GM12878 (cell line): ENCODE measurements at regions of chr6 and their contacts with region 1.

Region 1: GRCh38 chr6:52352239-52353008 is 9.5 kb upstream of the PAQR8 start:
- DNase-seq: peak; percentile 79
- ATAC-seq: peak; percentile 93
- H3K4me3 ChIP-seq: no peak overlapping the region
- H3K27ac ChIP-seq: peak overlapping the region; percentile 6; the same call in 1 of the 2 replicates
- H3K4me1 ChIP-seq: peaks cover 32% of the 10 kb centered on the region
- H3K27me3 ChIP-seq: no peaks in the 10 kb centered on the region
- CTCF ChIP-seq: no peak
- EP300 ChIP-seq: peak; percentile 22 to 66; a peak in 1 of 4 replicates
- POLR2A ChIP-seq: no peak
- RAD21 ChIP-seq: no peak

Region 2: DNA sequence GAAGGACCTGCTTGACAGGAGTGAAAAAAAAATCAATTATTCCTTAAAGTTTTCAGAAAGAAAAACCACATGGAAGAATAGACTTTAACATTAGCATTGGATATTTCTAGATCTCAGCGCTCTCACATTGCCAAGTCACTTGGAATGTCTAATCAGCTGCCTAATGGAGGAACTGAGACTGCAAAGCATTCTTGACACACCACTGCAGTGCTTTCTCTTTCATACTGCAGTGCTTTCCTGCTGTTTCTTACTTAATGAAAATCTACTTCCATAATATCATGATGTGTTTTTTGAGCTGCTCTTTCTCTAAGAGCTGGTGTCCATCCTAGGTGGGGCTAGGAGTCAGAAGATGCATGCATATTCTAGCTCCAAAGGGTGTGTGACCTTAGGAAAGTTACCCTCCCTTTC is 47.4 kb before region 1 on chr6:
- CTCF ChIA-PET with region 1: interaction called, 3 read pairs
- POLR2A ChIA-PET with region 1: interaction called, 9 read pairs
- RAD21 ChIA-PET with region 1: interaction called, 7 read pairs
- SMC1A ChIA-PET with region 1: interaction called, 34 read pairs
- in situ Hi-C with region 1: loop called (anchors 5 kb)
- intact Hi-C with region 1: loop called (anchors 2 kb)
- DNase-seq: no peak
- ATAC-seq: peak; percentile 74
- H3K4me3 ChIP-seq: peak overlapping the region; percentile 25; the same call in 1 of the 2 replicates
- H3K27ac ChIP-seq: peak overlapping the region; percentile 89
- H3K4me1 ChIP-seq: peaks cover 49% of the 10 kb centered on the region
- H3K27me3 ChIP-seq: no peaks in the 10 kb centered on the region
- CTCF ChIP-seq: no peak
- EP300 ChIP-seq: peak in 1 of 2 experiments; percentile 46; a peak in 2 of 4 replicates
- POLR2A ChIP-seq: no peak
- RAD21 ChIP-seq: 0 out of 2 replicates have a peak, but pooled peaks have one; percentile 1

Region 3: GRCh38 chr6:52317841-52318581 is 34.4 kb before region 1 on chr6:
- CTCF ChIA-PET with region 1: interaction called, 9 read pairs
- POLR2A ChIA-PET with region 1: interaction called, 6 read pairs
- RAD21 ChIA-PET with region 1: interaction called, 4 read pairs
- SMC1A ChIA-PET with region 1: interaction called, 6 read pairs
- in situ Hi-C with region 1: no loop called
- intact Hi-C with region 1: loop called (anchors 2 kb)
- DNase-seq: peak; percentile 62
- ATAC-seq: peak; percentile 99
- H3K4me3 ChIP-seq: no peak overlapping the region
- H3K27ac ChIP-seq: no peak overlapping the region
- H3K4me1 ChIP-seq: peaks cover 15% of the 10 kb centered on the region
- H3K27me3 ChIP-seq: no peaks in the 10 kb centered on the region
- CTCF ChIP-seq: no peak
- EP300 ChIP-seq: no peak; a peak in 1 of 4 replicates
- POLR2A ChIP-seq: no peak
- RAD21 ChIP-seq: 0 out of 2 replicates have a peak, but pooled peaks have one; percentile 11

Region 4: DNA sequence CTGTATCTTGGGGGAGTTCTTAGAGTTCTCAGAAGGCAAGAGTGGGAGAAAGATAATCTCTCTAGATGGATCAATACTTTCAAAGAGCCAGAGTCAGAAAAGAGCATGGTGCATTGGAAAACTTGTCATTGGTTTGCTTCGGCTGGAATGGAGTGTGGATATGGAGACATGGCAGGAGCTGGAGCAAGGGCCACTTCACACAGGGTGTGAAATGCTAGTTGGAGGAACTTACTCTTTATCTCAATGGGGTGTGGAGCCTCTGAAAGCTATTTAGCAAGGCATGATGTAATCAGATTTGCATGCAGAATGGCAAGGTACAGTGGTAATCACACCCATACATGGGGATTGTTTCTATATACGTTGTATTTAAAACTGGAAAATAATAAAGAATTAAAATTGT is 22.0 kb before region 1 on chr6:
- CTCF ChIA-PET with region 1: interaction called, 4 read pairs
- POLR2A ChIA-PET with region 1: interaction called, 4 read pairs
- RAD21 ChIA-PET with region 1: interaction called, 4 read pairs
- SMC1A ChIA-PET with region 1: interaction called, 12 read pairs
- in situ Hi-C with region 1: no loop called
- intact Hi-C with region 1: no loop called
- DNase-seq: no peak
- ATAC-seq: peak; percentile 55
- H3K4me3 ChIP-seq: no peak overlapping the region
- H3K27ac ChIP-seq: no peak overlapping the region
- H3K4me1 ChIP-seq: peaks cover 3% of the 10 kb centered on the region
- H3K27me3 ChIP-seq: no peaks in the 10 kb centered on the region
- CTCF ChIP-seq: no peak
- EP300 ChIP-seq: no peak
- POLR2A ChIP-seq: no peak
- RAD21 ChIP-seq: no peak